Caco-2 (cell line): ENCODE measurements at regions of chr6 and their contacts with region 1.

Region 1: GRCh38 chr6:105898286-105898685 is 187.8 kb upstream of the PRDM1 start:
- DNase-seq: no peak
- H3K4me3 ChIP-seq: no peak overlapping the region
- H3K4me3 Mint-ChIP-seq: no peak overlapping the region
- H3K27ac Mint-ChIP-seq: no peak overlapping the region
- H3K4me1 ChIP-seq: peaks cover 37% of the 10 kb centered on the region
- H3K4me1 Mint-ChIP-seq: peaks cover 11% of the 10 kb centered on the region
- H3K27me3 ChIP-seq: no peaks in the 10 kb centered on the region
- H3K27me3 Mint-ChIP-seq: no peaks in the 10 kb centered on the region
- CTCF ChIP-seq: no peak

Region 2: GRCh38 chr6:105733565-105734162 is 164.6 kb before region 1 on chr6:
- CTCF ChIA-PET with region 1: no interaction called
- POLR2A ChIA-PET with region 1: no interaction called
- intact Hi-C with region 1: loop called (anchors 5 kb)
- DNase-seq: no peak
- H3K4me3 ChIP-seq: no peak overlapping the region
- H3K4me3 Mint-ChIP-seq: no peak overlapping the region
- H3K27ac Mint-ChIP-seq: no peak overlapping the region
- H3K4me1 ChIP-seq: no peaks in the 10 kb centered on the region
- H3K4me1 Mint-ChIP-seq: peaks cover 6% of the 10 kb centered on the region
- H3K27me3 ChIP-seq: no peaks in the 10 kb centered on the region
- H3K27me3 Mint-ChIP-seq: no peaks in the 10 kb centered on the region
- CTCF ChIP-seq: peak; percentile 47 to 74

Region 3: DNA sequence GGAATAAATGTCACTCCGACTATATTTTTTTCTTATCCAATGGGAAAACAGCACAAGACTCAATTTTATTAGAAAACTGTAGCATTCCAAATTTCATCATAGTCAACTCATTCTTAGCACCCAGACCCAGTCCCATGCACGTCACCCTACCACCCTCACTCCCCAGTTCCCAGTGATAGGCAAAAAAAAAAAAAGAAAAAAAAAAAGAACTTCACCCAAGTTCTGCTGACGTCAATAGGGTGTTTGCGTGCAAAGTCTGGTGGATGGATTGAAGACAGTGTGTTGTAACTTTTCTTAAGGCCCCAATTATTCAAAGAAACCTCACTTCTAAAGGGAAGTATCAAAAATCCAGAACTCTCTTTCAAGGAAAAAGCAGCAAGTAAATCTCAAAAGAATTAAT is 26.0 kb before region 1 on chr6:
- CTCF ChIA-PET with region 1: no interaction called
- POLR2A ChIA-PET with region 1: no interaction called
- intact Hi-C with region 1: loop called (anchors 1 kb)
- DNase-seq: no peak
- H3K4me3 ChIP-seq: no peak overlapping the region
- H3K4me3 Mint-ChIP-seq: no peak overlapping the region
- H3K27ac Mint-ChIP-seq: no peak overlapping the region
- H3K4me1 ChIP-seq: peaks cover 33% of the 10 kb centered on the region
- H3K4me1 Mint-ChIP-seq: peaks cover 27% of the 10 kb centered on the region
- H3K27me3 ChIP-seq: no peaks in the 10 kb centered on the region
- H3K27me3 Mint-ChIP-seq: no peaks in the 10 kb centered on the region
- CTCF ChIP-seq: no peak

Region 4: GRCh38 chr6:105967917-105968584 is 69.8 kb after region 1 on chr6:
- CTCF ChIA-PET with region 1: no interaction called
- POLR2A ChIA-PET with region 1: no interaction called
- intact Hi-C with region 1: loop called (anchors 1 kb)
- DNase-seq: no peak
- H3K4me3 ChIP-seq: no peak overlapping the region
- H3K4me3 Mint-ChIP-seq: no peak overlapping the region
- H3K27ac Mint-ChIP-seq: peak overlapping the region; percentile 16
- H3K4me1 ChIP-seq: peaks cover 22% of the 10 kb centered on the region
- H3K4me1 Mint-ChIP-seq: peaks cover 24% of the 10 kb centered on the region
- H3K27me3 ChIP-seq: no peaks in the 10 kb centered on the region
- H3K27me3 Mint-ChIP-seq: no peaks in the 10 kb centered on the region
- CTCF ChIP-seq: no peak

Region 5: DNA sequence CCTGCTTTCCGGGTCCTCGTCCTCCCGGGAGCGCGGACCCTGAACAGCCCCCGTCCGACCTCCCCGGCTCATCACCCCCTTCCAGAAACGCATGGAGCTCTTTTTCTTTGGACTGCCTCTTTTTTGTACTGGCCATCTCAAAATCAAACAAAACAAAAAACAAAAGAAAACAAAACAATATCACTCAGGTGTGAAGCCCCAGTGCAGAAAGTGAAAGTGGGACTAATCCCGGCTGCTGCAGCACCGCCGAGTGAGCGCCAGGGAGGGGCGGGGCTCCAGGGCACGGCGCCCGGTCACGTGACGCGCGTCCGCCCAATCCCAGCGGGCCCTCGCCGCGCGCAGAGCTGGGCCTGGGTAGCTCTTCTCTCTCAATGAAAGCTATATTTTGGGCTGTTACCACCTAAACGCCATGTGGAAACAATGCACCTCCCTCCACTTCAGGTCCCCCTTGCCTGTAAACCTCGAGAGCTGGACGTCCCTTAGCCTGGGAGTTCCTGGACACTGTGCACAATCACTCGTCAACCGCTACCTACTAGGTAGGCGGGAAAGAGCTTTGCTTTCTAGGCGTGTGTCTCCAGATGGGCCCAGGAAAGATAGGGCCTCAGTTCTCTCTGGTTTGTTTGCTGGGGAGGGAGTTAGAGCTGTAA is 94.2 kb after region 1 on chr6:
- CTCF ChIA-PET with region 1: no interaction called
- POLR2A ChIA-PET with region 1: interaction called, 3 read pairs
- intact Hi-C with region 1: loop called (anchors 1 kb)
- DNase-seq: peak; percentile 75 to 88
- H3K4me3 ChIP-seq: peak overlapping the region; percentile 51
- H3K4me3 Mint-ChIP-seq: peak overlapping the region; percentile 73
- H3K27ac Mint-ChIP-seq: peak overlapping the region; percentile 73
- H3K4me1 ChIP-seq: peaks cover 16% of the 10 kb centered on the region; the same call in 1 of the 2 replicates
- H3K4me1 Mint-ChIP-seq: peaks cover 33% of the 10 kb centered on the region
- H3K27me3 ChIP-seq: no peaks in the 10 kb centered on the region
- H3K27me3 Mint-ChIP-seq: no peaks in the 10 kb centered on the region
- CTCF ChIP-seq: no peak